ENCODE measurements at regions of chr13 and their contacts with region 1.

Region 1: DNA sequence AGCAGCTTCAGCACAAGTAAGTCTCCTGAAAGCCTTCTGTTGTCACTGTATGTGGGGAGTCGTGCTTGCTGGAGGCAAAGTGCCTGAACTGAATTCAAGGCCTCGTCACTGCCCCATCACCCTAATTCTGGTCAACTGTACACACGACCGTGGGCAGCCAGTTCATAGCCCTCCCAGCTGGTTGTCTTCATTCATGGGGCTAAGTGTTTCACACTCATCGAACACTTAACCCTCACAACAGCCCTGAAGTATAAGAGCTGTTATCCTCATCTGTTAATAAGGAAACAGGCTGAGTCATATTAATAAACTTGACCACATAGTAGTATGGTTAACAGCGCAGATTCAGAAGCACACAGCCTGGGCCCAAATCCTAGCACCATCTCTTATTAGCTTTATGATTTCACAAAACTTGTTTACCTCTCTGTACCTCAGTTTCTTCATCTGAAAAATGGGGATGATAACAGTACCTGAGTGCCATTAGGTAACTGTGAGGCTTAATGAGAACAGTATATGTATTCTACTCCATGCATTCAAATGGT is 66.7 kb downstream of the CDADC1 start:
- DNase-seq: no peak
- ATAC-seq: no peak
- H3K4me3 ChIP-seq: no peak overlapping the region
- H3K4me3 Mint-ChIP-seq: no peak overlapping the region
- H3K27ac ChIP-seq: no peak overlapping the region
- H3K27ac Mint-ChIP-seq: no peak overlapping the region
- H3K4me1 ChIP-seq: no peaks in the 10 kb centered on the region
- H3K4me1 Mint-ChIP-seq: no peaks in the 10 kb centered on the region
- H3K27me3 ChIP-seq: no peaks in the 10 kb centered on the region
- H3K27me3 Mint-ChIP-seq: no peaks in the 10 kb centered on the region
- CTCF ChIP-seq: no peak

Region 2: GRCh38 chr13:48749699-48750473 is 564.5 kb before region 1 on chr13:
- CTCF ChIA-PET with region 1: no interaction called
- POLR2A ChIA-PET with region 1: no interaction called
- intact Hi-C with region 1: no loop called
- DNase-seq: peak; percentile 23
- ATAC-seq: peak; percentile 58
- H3K4me3 ChIP-seq: no peak overlapping the region
- H3K4me3 Mint-ChIP-seq: no peak overlapping the region
- H3K27ac ChIP-seq: no peak overlapping the region
- H3K27ac Mint-ChIP-seq: no peak overlapping the region
- H3K4me1 ChIP-seq: no peaks in the 10 kb centered on the region
- H3K4me1 Mint-ChIP-seq: peaks cover 6% of the 10 kb centered on the region
- H3K27me3 ChIP-seq: peaks cover 0 to 2% (median 0%) of the 10 kb centered on the region in 4 experiments
- H3K27me3 Mint-ChIP-seq: peaks cover 8% of the 10 kb centered on the region
- CTCF ChIP-seq: peak; percentile 48

Region 3: GRCh38 chr13:49400755-49401659 is 86.6 kb after region 1 on chr13:
- CTCF ChIA-PET with region 1: no interaction called
- POLR2A ChIA-PET with region 1: no interaction called
- intact Hi-C with region 1: loop called (anchors 10 kb)
- DNase-seq: peak; percentile 43
- ATAC-seq: peak; percentile 54
- H3K4me3 ChIP-seq: peak overlapping the region in 3 of 5 experiments; percentile 7 to 45 (median 18)
- H3K4me3 Mint-ChIP-seq: peak overlapping the region; percentile 81
- H3K27ac ChIP-seq: no peak overlapping the region
- H3K27ac Mint-ChIP-seq: peak overlapping the region; percentile 27
- H3K4me1 ChIP-seq: peaks cover 0 to 3% of the 10 kb centered on the region in 2 donors
- H3K4me1 Mint-ChIP-seq: peaks cover 8% of the 10 kb centered on the region
- H3K27me3 ChIP-seq: no peaks in the 10 kb centered on the region
- H3K27me3 Mint-ChIP-seq: no peaks in the 10 kb centered on the region
- CTCF ChIP-seq: no peak